OCI-LY7 (cell line): ENCODE measurements at regions of chr15 and their contacts with region 1.

Region 1: DNA sequence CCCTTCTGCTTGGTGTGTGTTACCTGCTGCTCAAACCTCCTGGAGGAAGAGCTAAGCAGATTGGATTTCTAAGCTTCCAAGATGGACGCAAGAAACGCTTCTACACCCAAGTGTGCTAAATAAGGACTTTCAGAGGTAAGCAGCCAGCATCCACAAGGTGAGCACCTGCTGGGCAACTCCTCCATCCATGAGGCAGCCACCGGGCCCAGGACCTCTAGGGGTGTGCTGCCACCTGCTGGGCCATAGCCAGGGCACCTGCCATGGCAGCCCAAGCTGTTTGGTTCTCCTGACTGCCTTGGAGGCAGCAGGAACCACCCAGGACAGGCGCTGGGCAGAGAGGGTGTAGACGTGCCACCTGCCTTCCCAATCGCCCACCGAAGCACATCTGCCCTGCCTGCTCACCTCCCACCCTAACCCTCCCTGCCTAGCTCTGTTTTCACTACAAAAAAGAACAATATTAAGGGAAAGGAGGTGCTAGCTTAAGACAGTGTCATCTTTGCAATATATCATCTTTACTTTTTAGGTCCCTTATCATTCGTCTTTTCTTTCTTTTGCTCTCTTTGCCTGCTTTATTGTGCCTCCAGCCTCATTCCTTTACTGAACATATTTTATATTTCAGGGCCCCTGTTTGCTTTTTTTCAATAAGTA is 12.9 kb downstream of the C15orf62 start:
- DNase-seq: peak; percentile 87
- H3K4me3 ChIP-seq: no peak overlapping the region
- H3K27ac ChIP-seq: no peak overlapping the region
- H3K4me1 ChIP-seq: peaks cover 24% of the 10 kb centered on the region
- CTCF ChIP-seq: peak; percentile 90

Region 2: GRCh38 chr15:40511472-40512133 is 271.1 kb before region 1 on chr15:
- CTCF ChIA-PET with region 1: no interaction called
- POLR2A ChIA-PET with region 1: interaction called, 4 read pairs
- intact Hi-C with region 1: loop called (anchors 10 kb)
- DNase-seq: no peak
- H3K4me3 ChIP-seq: peak overlapping the region; percentile 44
- H3K27ac ChIP-seq: no peak overlapping the region
- H3K4me1 ChIP-seq: no peaks in the 10 kb centered on the region
- CTCF ChIP-seq: no peak

Region 3: DNA sequence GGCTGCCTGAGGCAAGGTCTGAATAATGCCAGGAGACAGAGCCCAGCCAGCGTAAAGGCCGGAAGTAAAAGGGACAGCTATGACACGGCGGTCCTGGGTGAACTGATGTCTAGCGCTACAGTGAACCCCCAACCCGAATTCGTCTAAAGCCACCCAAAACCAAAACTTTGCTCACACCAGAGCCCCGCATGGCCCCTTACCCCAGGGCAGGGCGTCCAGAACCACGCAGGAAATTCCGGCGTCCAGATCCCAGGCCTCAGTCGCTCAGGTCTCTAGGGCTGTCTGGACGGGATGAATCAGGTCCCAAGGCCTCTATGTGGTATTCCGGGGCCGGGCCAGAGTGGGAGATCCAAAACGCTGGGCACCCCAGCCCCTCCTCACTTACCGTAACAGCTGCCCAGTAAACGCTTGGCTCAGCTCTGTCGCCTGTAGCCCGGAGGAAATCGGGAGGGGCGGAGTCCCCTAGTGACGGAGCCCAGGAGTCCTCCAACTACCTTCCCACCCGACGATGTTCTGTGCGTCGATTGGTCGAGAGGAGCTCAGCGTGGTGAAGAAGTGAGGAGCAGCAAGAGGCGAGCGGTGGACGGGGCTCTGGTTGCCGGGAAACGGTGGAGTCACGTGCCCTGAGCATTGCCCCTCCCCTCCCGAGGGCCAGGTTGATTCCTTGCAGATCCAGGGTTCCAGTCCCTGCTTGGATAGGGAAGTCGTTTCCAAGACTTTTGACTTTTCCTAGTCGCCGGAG is 217.9 kb before region 1 on chr15 and contains the start of gene CCDC32:
- CTCF ChIA-PET with region 1: no interaction called
- POLR2A ChIA-PET with region 1: no interaction called
- intact Hi-C with region 1: loop called (anchors 5 kb)
- DNase-seq: peak; percentile 98
- H3K4me3 ChIP-seq: peak within 1 kb of the TSS; percentile 92
- H3K27ac ChIP-seq: peak within 1 kb of the TSS; percentile 29
- H3K4me1 ChIP-seq: peaks cover 41% of the 10 kb centered on the region
- CTCF ChIP-seq: no peak
- total RNA-seq, gene CCDC32: 10.3 and 15.1 TPM in 2 replicates

Region 4: DNA sequence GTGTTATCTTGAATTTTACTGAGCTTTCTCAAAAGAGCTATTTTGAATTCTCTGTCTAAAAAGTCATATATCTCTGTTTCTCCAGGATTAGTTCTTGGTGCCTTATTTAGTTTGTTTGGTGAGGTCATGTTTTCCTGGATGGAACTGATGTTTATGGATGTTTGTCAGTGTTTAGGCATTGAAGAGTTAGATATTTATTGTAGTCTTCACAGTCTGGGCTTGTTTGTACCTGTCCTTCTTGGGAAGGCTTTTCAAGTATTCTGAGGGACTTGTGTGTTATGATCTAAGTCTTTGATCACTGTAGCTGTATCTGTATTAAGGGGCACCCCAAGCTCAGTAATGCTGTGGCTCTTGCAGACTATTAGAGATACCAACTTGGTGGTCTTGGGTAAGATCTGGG is 98.3 kb before region 1 on chr15:
- CTCF ChIA-PET with region 1: no interaction called
- POLR2A ChIA-PET with region 1: interaction called, 4 read pairs
- intact Hi-C with region 1: loop called (anchors 5 kb)
- DNase-seq: no peak
- H3K4me3 ChIP-seq: no peak overlapping the region
- H3K27ac ChIP-seq: no peak overlapping the region
- H3K4me1 ChIP-seq: peaks cover 16% of the 10 kb centered on the region
- CTCF ChIP-seq: no peak

Region 5: GRCh38 chr15:40743921-40744814 is 38.5 kb before region 1 on chr15:
- CTCF ChIA-PET with region 1: interaction called, 12 read pairs
- POLR2A ChIA-PET with region 1: interaction called, 7 read pairs
- intact Hi-C with region 1: loop called (anchors 1 kb)
- DNase-seq: no peak
- H3K4me3 ChIP-seq: no peak overlapping the region
- H3K27ac ChIP-seq: no peak overlapping the region
- H3K4me1 ChIP-seq: peaks cover 4% of the 10 kb centered on the region
- CTCF ChIP-seq: 0 out of 2 replicates have a peak, but pooled peaks have one; percentile 15

Region 6: GRCh38 chr15:40754883-40755811 is 27.6 kb before region 1 on chr15 and contains the start of gene RMDN3:
- CTCF ChIA-PET with region 1: no interaction called
- POLR2A ChIA-PET with region 1: interaction called, 3 read pairs
- intact Hi-C with region 1: loop called (anchors 2 kb)
- DNase-seq: peak; percentile 97
- H3K4me3 ChIP-seq: peak within 1 kb of the TSS; percentile 85
- H3K27ac ChIP-seq: peak within 1 kb of the TSS; percentile 90
- H3K4me1 ChIP-seq: peaks cover 52% of the 10 kb centered on the region
- CTCF ChIP-seq: no peak
- total RNA-seq, gene RMDN3: 10.7 and 14.9 TPM in 2 replicates

Region 7: GRCh38 chr15:40769274-40770146 is 13.2 kb before region 1 on chr15 and contains the start of gene C15orf62:
- CTCF ChIA-PET with region 1: interaction called, 5 read pairs
- POLR2A ChIA-PET with region 1: interaction called, 15 read pairs
- intact Hi-C with region 1: loop called (anchors 1 kb)
- DNase-seq: peak; percentile 94
- H3K4me3 ChIP-seq: peak within 1 kb of the TSS; percentile 61
- H3K27ac ChIP-seq: peak within 1 kb of the TSS; percentile 97
- H3K4me1 ChIP-seq: peaks cover 59% of the 10 kb centered on the region
- CTCF ChIP-seq: no peak
- total RNA-seq, gene C15orf62: 4.0 and 4.7 TPM in 2 replicates